SK-N-SH (cell line): ENCODE measurements at regions of chr1 and their contacts with region 1.

Region 1: DNA sequence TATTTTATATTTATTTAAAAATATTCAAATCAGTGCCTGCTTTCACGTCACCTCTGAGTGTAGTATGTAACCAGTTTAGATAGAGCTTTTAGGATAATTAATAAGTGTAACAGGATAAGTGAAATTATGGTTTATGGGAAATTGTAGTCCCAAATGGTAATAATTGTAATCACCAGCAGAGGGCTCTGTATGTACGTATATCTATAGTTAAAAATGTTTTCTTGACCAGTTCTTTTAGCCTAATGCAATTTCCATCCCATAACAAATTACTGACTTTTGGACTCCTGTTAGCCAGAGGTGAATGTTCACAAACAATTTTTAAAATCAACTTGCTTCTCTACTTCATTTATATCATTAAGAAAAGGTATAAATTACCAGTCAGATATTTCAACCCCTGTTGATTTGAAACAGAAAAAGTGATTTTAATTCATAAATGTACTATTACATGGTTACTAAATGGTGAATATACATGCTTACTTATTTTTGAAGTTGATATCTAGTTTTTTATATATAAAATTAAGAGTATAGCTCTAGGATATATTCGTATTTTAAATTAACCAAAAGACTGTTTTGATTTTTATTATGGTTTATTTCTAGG is 25.3 kb downstream of the SLC30A7 start:
- DNase-seq: peak; percentile 44
- H3K4me3 ChIP-seq: no peak overlapping the region
- H3K27ac ChIP-seq: no peak overlapping the region
- H3K4me1 ChIP-seq: peaks cover 0 to 5% of the 10 kb centered on the region in 2 experiments; a peak in 1 of 4 replicates
- H3K27me3 ChIP-seq: no peaks in the 10 kb centered on the region
- CTCF ChIP-seq: peak; percentile 75
- EP300 ChIP-seq: no peak
- RAD21 ChIP-seq: peak; percentile 80

Region 2: DNA sequence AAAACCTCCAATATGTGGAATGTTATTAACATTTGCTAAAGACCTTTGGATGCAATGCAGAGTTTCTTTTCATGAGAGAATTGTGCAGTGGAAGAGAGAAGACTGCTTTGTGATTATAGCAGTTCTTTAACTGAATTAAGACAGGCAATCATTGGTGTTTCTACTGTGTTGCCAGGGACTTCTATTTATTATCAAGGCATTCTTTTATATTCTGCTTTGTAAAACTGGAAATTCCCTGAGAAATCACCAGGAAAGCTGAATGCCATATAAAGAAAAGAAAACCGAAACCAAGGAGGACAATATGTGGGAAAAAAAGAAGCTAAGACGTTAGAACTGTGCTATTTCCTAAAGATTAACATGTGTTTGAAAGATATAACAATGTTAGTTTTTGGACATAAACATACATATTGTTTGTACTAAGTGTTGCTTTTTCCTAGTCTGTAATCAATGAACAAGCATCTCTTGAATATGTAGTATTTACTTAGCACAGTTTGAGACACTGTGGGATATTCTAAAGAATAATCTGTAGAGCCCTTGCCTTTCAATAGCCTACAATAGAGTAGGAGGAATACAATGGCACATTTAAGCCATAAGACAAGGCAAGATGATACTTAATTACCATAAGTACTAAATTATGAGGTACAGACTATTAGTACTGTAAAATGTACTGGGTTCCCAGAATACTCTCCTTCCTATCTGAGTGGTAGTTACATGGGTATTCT is 73.7 kb before region 1 on chr1:
- CTCF ChIA-PET with region 1: no interaction called
- POLR2A ChIA-PET with region 1: no interaction called
- DNase-seq: no peak
- H3K4me3 ChIP-seq: peak overlapping the region in 1 of 2 experiments; percentile 16; a peak in 1 of 4 replicates
- H3K27ac ChIP-seq: peak overlapping the region in 1 of 2 experiments; percentile 31; a peak in 1 of 4 replicates
- H3K4me1 ChIP-seq: no peaks in the 10 kb centered on the region
- H3K27me3 ChIP-seq: no peaks in the 10 kb centered on the region
- CTCF ChIP-seq: no peak
- EP300 ChIP-seq: no peak
- RAD21 ChIP-seq: no peak

Region 3: GRCh38 chr1:100905181-100905580 is 16.0 kb before region 1 on chr1:
- CTCF ChIA-PET with region 1: interaction called, 25 read pairs
- POLR2A ChIA-PET with region 1: no interaction called
- DNase-seq: no peak
- H3K4me3 ChIP-seq: no peak overlapping the region
- H3K27ac ChIP-seq: no peak overlapping the region
- H3K4me1 ChIP-seq: no peaks in the 10 kb centered on the region; a peak in 1 of 4 replicates
- H3K27me3 ChIP-seq: no peaks in the 10 kb centered on the region
- CTCF ChIP-seq: no peak
- EP300 ChIP-seq: no peak
- RAD21 ChIP-seq: no peak

Region 4: GRCh38 chr1:101136739-101137138 is 215.5 kb after region 1 on chr1:
- CTCF ChIA-PET with region 1: no interaction called
- POLR2A ChIA-PET with region 1: no interaction called
- DNase-seq: no peak
- H3K4me3 ChIP-seq: no peak overlapping the region
- H3K27ac ChIP-seq: no peak overlapping the region
- H3K4me1 ChIP-seq: peaks cover 0 to 3% of the 10 kb centered on the region in 2 experiments; a peak in 2 of 4 replicates
- H3K27me3 ChIP-seq: no peaks in the 10 kb centered on the region
- CTCF ChIP-seq: no peak
- EP300 ChIP-seq: no peak
- RAD21 ChIP-seq: no peak